HepG2 (cell line): ENCODE measurements at regions of chr9 and their contacts with region 1.

Region 1: DNA sequence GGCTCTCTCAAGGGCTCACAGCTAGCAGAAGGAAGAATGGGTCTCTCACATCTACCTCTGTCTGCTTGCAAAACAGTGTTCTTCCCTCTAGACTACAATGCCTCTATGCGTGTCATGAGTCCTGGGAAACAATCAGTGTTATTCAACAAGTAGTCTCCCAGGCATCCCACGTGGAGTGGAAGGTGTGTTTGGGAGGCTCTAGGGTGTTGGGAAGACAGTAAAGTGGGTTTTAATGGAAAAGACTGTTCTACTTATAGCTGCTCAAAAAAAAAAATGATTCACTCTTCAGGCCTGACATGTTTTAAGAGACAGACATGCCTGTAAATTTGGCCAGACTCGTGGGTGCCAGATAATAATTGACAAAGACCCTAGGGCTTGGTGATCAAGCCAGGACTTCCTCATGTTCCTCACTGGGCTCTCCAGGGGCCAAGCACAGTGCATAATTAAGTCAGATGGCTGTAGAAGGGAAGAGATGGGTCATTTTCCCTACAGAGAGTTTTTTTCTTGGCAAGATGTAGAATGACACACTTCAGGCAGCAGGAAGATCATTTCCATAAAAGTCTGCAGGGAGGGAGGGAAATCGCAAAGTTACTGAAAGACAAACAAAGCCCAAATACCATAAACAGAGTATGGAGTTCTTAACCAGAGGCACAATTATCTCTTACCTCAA is 246.4 kb downstream of the ACTL7B start:
- DNase-seq: no peak
- ATAC-seq: no peak
- H3K4me3 ChIP-seq: no peak overlapping the region
- H3K27ac ChIP-seq: no peak overlapping the region
- H3K4me1 ChIP-seq: no peaks in the 10 kb centered on the region
- H3K27me3 ChIP-seq: no peaks in the 10 kb centered on the region
- CTCF ChIP-seq: no peak
- EP300 ChIP-seq: no peak
- POLR2A ChIP-seq: no peak
- RAD21 ChIP-seq: no peak

Region 2: GRCh38 chr9:108643731-108644510 is 34.6 kb after region 1 on chr9:
- CTCF ChIA-PET with region 1: no interaction called
- POLR2A ChIA-PET with region 1: no interaction called
- in situ Hi-C with region 1: no loop called
- intact Hi-C with region 1: loop called (anchors 1 kb)
- DNase-seq: no peak
- ATAC-seq: no peak
- H3K4me3 ChIP-seq: no peak overlapping the region
- H3K27ac ChIP-seq: no peak overlapping the region
- H3K4me1 ChIP-seq: no peaks in the 10 kb centered on the region
- H3K27me3 ChIP-seq: peaks cover 0 to 6% of the 10 kb centered on the region in 2 experiments; a peak in 2 of 5 replicates
- CTCF ChIP-seq: no peak
- EP300 ChIP-seq: no peak
- POLR2A ChIP-seq: no peak
- RAD21 ChIP-seq: no peak